ENCODE measurements at regions of chr17 and their contacts with region 1.

Region 1: GRCh38 chr17:64025732-64026294 is 5.4 kb upstream of the ICAM2 start:
- H3K4me3 ChIP-seq: peak overlapping the region; percentile 32
- H3K27ac ChIP-seq: no peak overlapping the region
- H3K4me1 ChIP-seq: no peaks in the 10 kb centered on the region
- CTCF ChIP-seq: peak; percentile 88

Region 2: GRCh38 chr17:63382826-63383225 is 643.0 kb before region 1 on chr17:
- CTCF ChIA-PET with region 1: no interaction called
- POLR2A ChIA-PET with region 1: no interaction called
- H3K4me3 ChIP-seq: no peak overlapping the region
- H3K27ac ChIP-seq: no peak overlapping the region
- H3K4me1 ChIP-seq: no peaks in the 10 kb centered on the region
- CTCF ChIP-seq: no peak

Region 3: GRCh38 chr17:63904316-63904715 is 121.5 kb before region 1 on chr17:
- CTCF ChIA-PET with region 1: interaction called, 12 read pairs
- POLR2A ChIA-PET with region 1: no interaction called
- H3K4me3 ChIP-seq: no peak overlapping the region
- H3K27ac ChIP-seq: no peak overlapping the region
- H3K4me1 ChIP-seq: no peaks in the 10 kb centered on the region
- CTCF ChIP-seq: no peak

Region 4: GRCh38 chr17:63919311-63919723 is 106.5 kb before region 1 on chr17:
- CTCF ChIA-PET with region 1: interaction called, 43 read pairs
- POLR2A ChIA-PET with region 1: no interaction called
- H3K4me3 ChIP-seq: no peak overlapping the region
- H3K27ac ChIP-seq: no peak overlapping the region
- H3K4me1 ChIP-seq: no peaks in the 10 kb centered on the region
- CTCF ChIP-seq: peak; percentile 38; the same call in 1 of the 2 replicates

Region 5: DNA sequence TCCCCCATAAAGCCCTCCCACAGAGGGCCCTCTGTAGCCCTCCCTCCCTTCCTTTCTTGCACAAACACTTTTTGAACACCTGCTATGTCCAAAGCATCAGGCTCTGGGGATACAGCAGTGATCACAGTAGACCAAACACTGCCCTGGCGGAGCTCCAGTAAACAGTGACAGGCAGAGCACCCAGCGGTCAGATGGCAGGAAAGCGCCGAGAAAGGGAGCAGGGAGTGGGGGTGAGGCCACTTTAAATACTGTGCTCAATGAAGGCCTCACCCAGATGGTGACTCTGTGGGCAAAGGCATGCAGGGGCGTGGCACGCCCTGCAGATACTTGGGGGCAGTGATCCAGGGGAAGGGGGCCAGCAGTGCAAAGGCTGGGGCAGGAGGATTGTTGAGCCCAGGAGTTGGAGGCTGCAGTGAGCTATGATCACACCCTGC is 20.1 kb before region 1 on chr17:
- CTCF ChIA-PET with region 1: interaction called, 10 read pairs
- POLR2A ChIA-PET with region 1: no interaction called
- H3K4me3 ChIP-seq: no peak overlapping the region
- H3K27ac ChIP-seq: no peak overlapping the region
- H3K4me1 ChIP-seq: no peaks in the 10 kb centered on the region; the same call in 1 of the 2 replicates
- CTCF ChIP-seq: no peak

Region 6: DNA sequence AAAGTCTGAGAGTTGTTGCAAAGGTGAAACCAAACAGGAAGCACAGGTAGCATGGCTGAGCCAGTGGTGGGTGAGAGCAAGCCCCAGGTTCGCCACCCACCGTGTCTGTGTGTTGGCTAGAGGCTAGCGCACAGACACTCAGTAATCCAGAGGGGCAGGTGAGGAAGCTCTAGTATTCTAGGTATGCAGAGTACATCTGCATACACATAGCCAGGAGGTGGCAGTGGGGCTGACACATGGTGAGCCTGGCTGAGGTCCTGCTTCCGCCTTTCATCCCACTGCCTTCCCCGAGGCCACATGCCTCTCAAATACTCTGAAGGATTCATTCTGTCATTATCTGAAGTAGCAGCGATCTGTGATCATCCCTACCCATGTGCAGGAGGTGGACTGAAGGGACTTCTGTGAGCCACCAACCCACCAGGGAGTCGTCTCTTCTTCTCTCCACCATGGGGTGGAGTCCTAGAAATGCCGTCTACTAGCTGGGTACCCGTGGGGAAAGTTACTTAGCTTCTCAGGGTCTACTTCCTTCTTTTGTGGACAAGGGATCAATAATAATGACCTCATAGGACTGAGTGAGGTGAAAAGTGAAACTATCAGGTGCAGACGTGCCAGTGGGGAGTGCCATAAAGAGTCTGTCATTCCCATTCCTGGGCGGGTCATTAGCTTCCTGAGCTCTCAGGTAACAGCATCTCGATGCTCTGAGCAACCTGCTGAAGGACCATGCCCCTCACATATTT is 30.6 kb after region 1 on chr17:
- CTCF ChIA-PET with region 1: interaction called, 19 read pairs
- POLR2A ChIA-PET with region 1: no interaction called
- H3K4me3 ChIP-seq: no peak overlapping the region
- H3K27ac ChIP-seq: no peak overlapping the region
- H3K4me1 ChIP-seq: no peaks in the 10 kb centered on the region
- CTCF ChIP-seq: no peak

Region 7: DNA sequence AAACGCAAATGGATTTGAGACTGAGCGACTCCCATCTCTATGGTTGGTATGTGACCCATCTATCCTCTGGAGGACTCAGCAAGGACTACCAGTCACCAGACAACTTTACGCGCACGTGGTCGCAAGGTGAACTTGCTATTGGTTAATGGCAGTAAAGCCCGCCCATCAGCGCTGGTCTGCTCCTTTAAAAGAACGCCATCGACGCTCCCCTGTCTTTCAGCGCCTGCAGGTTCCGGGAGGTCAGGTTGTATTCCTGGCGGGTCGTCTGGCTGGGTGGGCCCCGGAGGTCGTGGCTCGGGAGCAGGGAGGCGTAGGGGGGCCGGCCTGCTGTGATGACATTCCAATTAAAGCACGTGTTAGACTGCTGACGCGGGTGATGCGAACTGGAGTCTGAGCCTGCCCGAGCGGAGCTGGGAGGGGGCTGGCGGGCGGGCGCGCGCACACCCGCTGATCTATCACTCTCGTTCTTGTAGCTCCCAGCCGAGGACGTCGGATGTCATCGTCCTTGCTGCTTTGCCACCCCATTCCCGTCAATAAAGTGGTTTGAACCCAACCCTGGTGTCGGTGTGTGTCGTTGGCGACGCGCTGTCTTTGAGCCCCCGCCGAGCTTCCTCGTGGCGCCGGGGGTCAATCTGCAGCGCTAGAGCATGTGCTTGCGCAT is 120.1 kb after region 1 on chr17:
- CTCF ChIA-PET with region 1: interaction called, 17 read pairs
- POLR2A ChIA-PET with region 1: interaction called, 5 read pairs
- H3K4me3 ChIP-seq: peak overlapping the region; percentile 63
- H3K27ac ChIP-seq: peak overlapping the region; percentile 91
- H3K4me1 ChIP-seq: no peaks in the 10 kb centered on the region
- CTCF ChIP-seq: no peak

Region 8: GRCh38 chr17:64291254-64291851 is 265.5 kb after region 1 on chr17:
- CTCF ChIA-PET with region 1: interaction called, 11 read pairs
- POLR2A ChIA-PET with region 1: no interaction called
- H3K4me3 ChIP-seq: no peak overlapping the region
- H3K27ac ChIP-seq: no peak overlapping the region
- H3K4me1 ChIP-seq: no peaks in the 10 kb centered on the region
- CTCF ChIP-seq: no peak

Measured in HEK293 (cell line).